ENCODE measurements at regions of chr7 and their contacts with region 1.

Region 1: DNA sequence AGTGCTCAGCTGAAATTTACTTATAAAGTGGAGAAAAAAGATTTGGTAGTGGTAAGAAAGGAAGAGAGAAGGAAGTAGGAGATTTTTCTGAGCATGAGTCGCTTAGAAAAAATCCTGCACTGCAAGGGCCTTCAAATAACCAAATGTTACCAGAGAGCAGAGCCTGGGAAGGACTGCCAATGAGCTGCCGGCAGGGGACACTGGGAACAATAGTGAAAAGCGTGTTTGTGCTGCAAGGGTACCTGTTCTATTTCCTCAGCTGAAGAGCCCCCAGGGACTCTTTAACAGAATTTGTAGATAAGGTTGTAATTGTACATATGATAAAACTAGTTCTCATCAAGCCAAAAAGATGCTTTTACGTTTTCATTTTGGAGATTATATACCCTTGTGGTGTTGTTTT is 696.3 kb upstream of the C7orf33 start:
- DNase-seq: no peak
- ATAC-seq: no peak
- H3K4me3 ChIP-seq: no peak overlapping the region
- H3K27ac ChIP-seq: no peak overlapping the region
- H3K4me1 ChIP-seq: no peaks in the 10 kb centered on the region
- H3K27me3 ChIP-seq: no peaks in the 10 kb centered on the region
- CTCF ChIP-seq: no peak

Region 2: GRCh38 chr7:147869456-147869855 is 24.8 kb before region 1 on chr7:
- intact Hi-C with region 1: loop called in 1 of 10 experiments (anchors 1 kb)
- DNase-seq: no peak
- ATAC-seq: no peak
- H3K4me3 ChIP-seq: no peak overlapping the region
- H3K27ac ChIP-seq: no peak overlapping the region
- H3K4me1 ChIP-seq: no peaks in the 10 kb centered on the region
- H3K27me3 ChIP-seq: no peaks in the 10 kb centered on the region
- CTCF ChIP-seq: no peak

Measured in heart right ventricle (tissue), 16 donors.